B cell (primary cell): ENCODE measurements at regions of chr13 and their contacts with region 1.

Region 1: DNA sequence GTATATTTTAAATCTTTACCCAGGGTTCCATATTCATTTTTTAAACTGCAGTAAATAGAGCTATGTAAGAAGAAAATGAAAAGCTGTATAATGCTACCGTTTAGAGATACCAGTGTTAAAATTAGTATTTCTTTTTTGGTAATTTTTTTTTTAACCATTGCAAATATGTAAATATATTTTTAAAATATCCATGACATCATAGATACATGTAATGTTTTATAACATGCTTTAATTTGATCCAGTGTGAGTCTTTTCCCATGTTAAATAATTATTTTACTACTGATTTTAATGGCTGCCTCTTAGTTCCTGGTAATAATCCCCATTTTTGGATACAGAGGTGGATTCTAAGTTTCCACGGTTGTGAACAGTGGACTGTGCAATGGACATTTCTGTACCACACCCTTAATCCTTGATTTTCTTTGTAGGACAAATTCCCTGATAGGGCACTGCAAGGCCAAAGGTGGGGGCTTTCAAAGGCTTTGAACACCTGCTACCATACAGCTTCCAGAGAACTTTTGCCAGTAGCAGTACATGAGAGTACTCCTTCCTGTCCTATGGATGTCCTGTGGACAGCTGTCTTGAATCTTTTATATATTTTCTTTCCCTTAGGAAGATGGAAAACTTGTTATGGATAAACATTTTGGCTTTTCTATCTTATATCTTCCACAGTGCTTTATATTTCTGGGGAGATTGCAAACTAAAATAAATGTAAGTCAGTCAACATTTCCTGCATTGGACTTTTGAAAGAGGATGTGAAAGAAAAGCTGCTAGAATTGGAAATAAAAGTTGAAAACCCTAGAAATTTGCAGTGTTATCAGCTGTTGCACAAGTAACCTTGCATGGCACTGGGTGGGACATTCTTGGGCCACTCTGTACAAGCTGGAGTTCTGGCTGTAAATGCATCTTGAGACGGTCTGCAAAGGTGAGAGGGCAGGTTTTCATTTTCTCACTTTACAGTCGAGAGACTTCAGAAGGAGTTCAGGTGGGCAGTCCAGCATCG is 46.8 kb downstream of the ARHGEF7 start:
- DNase-seq: no peak
- ATAC-seq: no peak
- H3K4me3 ChIP-seq: peak overlapping the region in 1 of 5 experiments; percentile 23
- H3K4me3 Mint-ChIP-seq: peak overlapping the region; percentile 62
- H3K27ac ChIP-seq: peak overlapping the region in 1 of 2 donors; percentile 8
- H3K27ac Mint-ChIP-seq: peak overlapping the region; percentile 65
- H3K4me1 ChIP-seq: peaks cover 42 to 50% of the 10 kb centered on the region in 2 donors
- H3K4me1 Mint-ChIP-seq: peaks cover 67% of the 10 kb centered on the region
- H3K27me3 ChIP-seq: no peaks in the 10 kb centered on the region
- H3K27me3 Mint-ChIP-seq: no peaks in the 10 kb centered on the region
- CTCF ChIP-seq: no peak

Region 2: GRCh38 chr13:111129465-111130115 is 32.3 kb before region 1 on chr13:
- CTCF ChIA-PET with region 1: no interaction called
- POLR2A ChIA-PET with region 1: no interaction called
- intact Hi-C with region 1: loop called (anchors 5 kb)
- DNase-seq: peak; percentile 47
- ATAC-seq: peak; percentile 67
- H3K4me3 ChIP-seq: no peak overlapping the region
- H3K4me3 Mint-ChIP-seq: peak overlapping the region; percentile 79
- H3K27ac ChIP-seq: no peak overlapping the region
- H3K27ac Mint-ChIP-seq: peak overlapping the region; percentile 57
- H3K4me1 ChIP-seq: peaks cover 0 to 4% of the 10 kb centered on the region in 2 donors
- H3K4me1 Mint-ChIP-seq: peaks cover 12% of the 10 kb centered on the region
- H3K27me3 ChIP-seq: peaks cover 0 to 4% (median 0%) of the 10 kb centered on the region in 4 experiments
- H3K27me3 Mint-ChIP-seq: peaks cover 7% of the 10 kb centered on the region
- CTCF ChIP-seq: no peak

Region 3: DNA sequence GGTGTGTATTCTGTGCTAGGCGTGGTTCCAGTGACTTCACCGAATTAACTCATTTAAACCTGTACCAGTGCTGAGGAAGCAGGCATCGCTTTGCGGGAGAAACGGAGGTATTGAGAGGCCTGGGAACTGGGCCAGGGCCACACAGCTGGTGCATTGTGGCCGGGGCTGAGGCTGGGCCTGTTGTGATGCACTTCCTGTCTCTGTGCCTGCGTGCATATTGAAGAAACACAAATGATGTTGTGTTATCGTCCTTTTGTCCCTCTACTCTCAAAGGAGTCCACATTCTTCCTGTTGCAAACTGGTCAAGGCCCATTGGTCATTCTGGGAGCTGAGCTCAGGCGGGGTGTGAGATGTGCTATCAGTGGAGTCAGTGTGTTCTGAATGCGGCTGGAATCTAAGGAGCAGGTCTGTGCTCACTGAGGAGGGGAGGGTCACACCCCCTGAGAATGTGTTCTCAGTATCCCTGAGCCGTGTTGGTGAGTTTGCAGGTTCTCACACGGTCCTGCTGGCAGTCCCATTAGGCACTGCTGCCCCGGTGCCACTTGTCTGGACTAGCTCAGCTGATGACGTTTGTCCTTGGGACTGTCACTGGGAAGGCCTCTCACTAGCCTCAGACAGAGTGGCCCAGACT is 15.3 kb after region 1 on chr13:
- CTCF ChIA-PET with region 1: interaction called, 5 read pairs
- POLR2A ChIA-PET with region 1: no interaction called
- intact Hi-C with region 1: loop called (anchors 2 kb)
- DNase-seq: peak; percentile 69
- ATAC-seq: peak; percentile 74
- H3K4me3 ChIP-seq: peak overlapping the region in 1 of 5 experiments; percentile 5
- H3K4me3 Mint-ChIP-seq: peak overlapping the region; percentile 78
- H3K27ac ChIP-seq: peak overlapping the region; percentile 61 to 73
- H3K27ac Mint-ChIP-seq: peak overlapping the region; percentile 95
- H3K4me1 ChIP-seq: peaks cover 46 to 58% of the 10 kb centered on the region in 2 donors
- H3K4me1 Mint-ChIP-seq: peaks cover 75% of the 10 kb centered on the region
- H3K27me3 ChIP-seq: no peaks in the 10 kb centered on the region
- H3K27me3 Mint-ChIP-seq: no peaks in the 10 kb centered on the region
- CTCF ChIP-seq: no peak

Region 4: GRCh38 chr13:111216166-111216960 is 54.5 kb after region 1 on chr13:
- CTCF ChIA-PET with region 1: interaction called, 11 read pairs
- POLR2A ChIA-PET with region 1: no interaction called
- intact Hi-C with region 1: no loop called
- DNase-seq: peak; percentile 61
- ATAC-seq: peak; percentile 74
- H3K4me3 ChIP-seq: no peak overlapping the region
- H3K4me3 Mint-ChIP-seq: no peak overlapping the region
- H3K27ac ChIP-seq: no peak overlapping the region
- H3K27ac Mint-ChIP-seq: peak overlapping the region; percentile 55
- H3K4me1 ChIP-seq: peaks cover 18 to 31% of the 10 kb centered on the region in 2 donors
- H3K4me1 Mint-ChIP-seq: peaks cover 47% of the 10 kb centered on the region
- H3K27me3 ChIP-seq: no peaks in the 10 kb centered on the region
- H3K27me3 Mint-ChIP-seq: no peaks in the 10 kb centered on the region
- CTCF ChIP-seq: peak; percentile 62